ENCODE measurements at regions of chr16 and their contacts with region 1.

Region 1: DNA sequence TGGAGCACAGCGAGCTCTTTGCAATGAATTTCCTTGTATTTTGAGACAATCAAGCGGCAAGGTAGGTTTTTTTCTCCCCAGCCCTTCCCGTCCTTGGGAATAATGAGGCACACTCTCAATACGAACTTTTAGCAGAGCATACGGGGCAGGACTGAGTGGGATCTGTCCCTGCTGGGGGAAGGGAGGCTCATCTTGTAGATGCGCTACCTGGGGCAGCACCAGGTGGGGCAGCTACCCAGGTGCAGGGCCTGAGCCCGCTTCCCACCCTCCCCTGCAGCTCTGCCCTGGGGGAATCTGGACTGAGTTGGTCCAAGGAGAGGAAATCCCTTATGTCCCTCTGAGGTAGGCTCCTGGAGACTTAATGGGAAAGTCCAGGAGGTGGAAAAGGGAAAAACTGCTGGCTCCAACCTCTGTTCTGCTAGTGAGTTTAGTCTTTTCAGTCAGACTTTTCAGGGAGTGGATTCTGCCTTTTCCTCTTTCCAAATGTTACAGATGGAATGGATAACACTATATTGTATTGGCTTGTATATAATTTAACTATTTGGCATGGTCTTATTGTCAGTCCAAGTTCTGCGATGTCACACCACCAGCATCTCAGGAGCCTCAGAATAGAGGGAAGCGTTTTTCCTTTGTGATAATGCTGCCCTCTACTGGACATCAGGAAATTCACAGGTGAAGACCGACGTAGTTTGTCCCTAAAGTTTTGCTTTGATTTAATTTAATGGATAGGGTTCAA is 9.6 kb upstream of the CES1 start:
- DNase-seq: peak; percentile 15
- H3K4me3 Mint-ChIP-seq: no peak overlapping the region
- H3K27ac Mint-ChIP-seq: no peak overlapping the region
- H3K4me1 Mint-ChIP-seq: no peaks in the 10 kb centered on the region
- H3K27me3 Mint-ChIP-seq: peaks cover 8% of the 10 kb centered on the region

Region 2: DNA sequence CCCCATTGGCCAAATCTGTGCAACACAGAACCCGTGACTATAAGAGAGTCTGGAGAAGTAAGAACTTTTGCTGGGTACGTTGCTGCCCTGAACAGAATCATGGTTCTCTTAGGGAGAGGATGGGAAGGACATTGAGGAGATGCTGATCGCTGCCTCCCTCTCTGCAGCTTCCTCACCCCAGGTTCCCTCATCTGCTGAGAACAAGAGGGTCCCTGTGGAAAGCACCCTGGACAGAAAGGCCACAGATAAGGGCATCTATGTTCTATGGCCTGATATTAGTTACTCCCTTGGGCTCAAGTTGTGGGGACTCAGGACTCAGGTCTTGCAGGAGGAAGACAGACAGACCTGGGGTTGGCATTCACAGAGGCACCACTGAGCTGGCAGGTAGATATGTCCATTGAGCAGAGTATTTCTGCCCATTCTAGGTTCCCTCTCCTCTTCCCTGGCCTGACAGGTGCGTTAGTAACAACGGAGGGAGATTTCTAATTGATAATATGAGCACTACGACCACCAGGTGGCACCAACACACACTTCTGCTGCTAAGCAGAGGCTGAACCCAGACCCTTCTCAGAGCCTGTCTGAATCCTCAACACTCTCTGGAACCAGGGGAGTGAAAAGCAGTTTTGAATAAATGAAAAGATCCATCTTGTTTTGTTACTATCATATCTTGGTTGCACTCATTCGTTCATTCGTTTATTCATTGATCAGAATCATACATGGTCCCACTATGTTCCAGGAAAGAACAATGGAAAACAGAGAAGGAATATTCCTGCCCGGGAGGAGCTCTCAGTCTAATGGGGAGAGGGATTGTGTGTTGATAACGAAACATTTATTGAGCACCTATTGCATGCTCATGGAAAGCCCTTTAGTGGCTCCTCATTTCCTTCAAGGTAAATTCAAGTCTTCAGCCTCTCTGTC is 130.3 kb before region 1 on chr16:
- CTCF ChIA-PET with region 1: interaction called, 32 read pairs
- POLR2A ChIA-PET with region 1: no interaction called
- intact Hi-C with region 1: loop called (anchors 1 kb)
- DNase-seq: peak; percentile 65
- H3K4me3 Mint-ChIP-seq: no peak overlapping the region
- H3K27ac Mint-ChIP-seq: no peak overlapping the region
- H3K4me1 Mint-ChIP-seq: no peaks in the 10 kb centered on the region
- H3K27me3 Mint-ChIP-seq: peaks cover 15% of the 10 kb centered on the region

Measured in activated CD4-positive, alpha-beta memory T cell treated with anti-CD3 and anti-CD28 coated beads for 36 hours (primary cell).